ENCODE measurements at regions of chr2 and their contacts with region 1.

Region 1: GRCh38 chr2:10122386-10123280 is at the start of gene RRM2:
- DNase-seq: peak; percentile 96
- ATAC-seq: peak; percentile 90
- H3K4me3 Mint-ChIP-seq: peak within 1 kb of the TSS; percentile 91
- H3K27ac Mint-ChIP-seq: peak within 1 kb of the TSS; percentile 97
- H3K4me1 Mint-ChIP-seq: peaks cover 36% of the 10 kb centered on the region
- H3K27me3 Mint-ChIP-seq: no peaks in the 10 kb centered on the region; the same call in 1 of the 2 replicates
- CTCF ChIP-seq: no peak
- total RNA-seq, gene RRM2: 119 to 129 TPM (median 126 TPM) in 3 replicates

Region 2: GRCh38 chr2:10003206-10004125 is 119.2 kb before region 1 on chr2:
- CTCF ChIA-PET with region 1: no interaction called
- POLR2A ChIA-PET with region 1: no interaction called
- DNase-seq: no peak
- ATAC-seq: no peak
- H3K4me3 Mint-ChIP-seq: no peak overlapping the region
- H3K27ac Mint-ChIP-seq: no peak overlapping the region
- H3K4me1 Mint-ChIP-seq: peaks cover 11% of the 10 kb centered on the region
- H3K27me3 Mint-ChIP-seq: no peaks in the 10 kb centered on the region; the same call in 1 of the 2 replicates
- CTCF ChIP-seq: no peak

Region 3: GRCh38 chr2:10135296-10136089 is 12.9 kb after region 1 on chr2:
- CTCF ChIA-PET with region 1: interaction called, 25 read pairs
- POLR2A ChIA-PET with region 1: no interaction called
- DNase-seq: no peak
- ATAC-seq: no peak
- H3K4me3 Mint-ChIP-seq: no peak overlapping the region
- H3K27ac Mint-ChIP-seq: peak overlapping the region; percentile 64; the same call in 1 of the 2 replicates
- H3K4me1 Mint-ChIP-seq: peaks cover 39% of the 10 kb centered on the region
- H3K27me3 Mint-ChIP-seq: no peaks in the 10 kb centered on the region
- CTCF ChIP-seq: no peak

Region 4: GRCh38 chr2:10141736-10142642 is 19.4 kb after region 1 on chr2:
- CTCF ChIA-PET with region 1: interaction called, 25 read pairs
- POLR2A ChIA-PET with region 1: no interaction called
- DNase-seq: peak; percentile 68
- ATAC-seq: peak; percentile 89
- H3K4me3 Mint-ChIP-seq: no peak overlapping the region
- H3K27ac Mint-ChIP-seq: no peak overlapping the region; the same call in 1 of the 2 replicates
- H3K4me1 Mint-ChIP-seq: peaks cover 5% of the 10 kb centered on the region; the same call in 1 of the 2 replicates
- H3K27me3 Mint-ChIP-seq: no peaks in the 10 kb centered on the region
- CTCF ChIP-seq: peak; percentile 60